Mammary epithelial cell (primary cell): ENCODE measurements at regions of chr10 and their contacts with region 1.

Region 1: GRCh38 chr10:99042051-99042771 is 193.4 kb downstream of the HPSE2 start:
- DNase-seq: no peak
- H3K4me3 ChIP-seq: no peak overlapping the region
- H3K27ac ChIP-seq: no peak overlapping the region
- H3K4me1 ChIP-seq: no peaks in the 10 kb centered on the region
- H3K27me3 ChIP-seq: no peaks in the 10 kb centered on the region
- CTCF ChIP-seq: no peak

Region 2: DNA sequence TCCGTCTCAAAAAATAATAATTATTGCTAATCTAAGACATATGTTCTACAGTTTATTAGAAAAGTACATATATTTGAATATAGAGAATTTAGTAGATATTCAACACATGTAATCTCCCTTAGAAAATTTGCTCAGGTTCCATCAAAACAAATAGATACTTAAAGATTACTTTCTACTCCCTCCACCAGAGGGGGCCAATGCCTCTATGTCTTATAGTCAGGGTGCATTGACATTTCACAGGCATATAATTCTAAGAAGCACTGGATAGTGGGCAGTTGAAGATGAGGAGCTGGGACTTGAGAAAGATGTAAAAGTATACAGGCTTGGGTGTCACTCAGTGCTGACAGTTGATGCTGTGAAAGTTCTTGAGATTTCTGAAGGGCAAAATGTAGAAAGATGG is 293.9 kb before region 1 on chr10:
- CTCF ChIA-PET with region 1: no interaction called
- dilution Hi-C with region 1: no loop called
- in situ Hi-C with region 1: no loop called
- intact Hi-C with region 1: loop called (anchors 1 kb)
- DNase-seq: peak; percentile 23
- H3K4me3 ChIP-seq: no peak overlapping the region
- H3K27ac ChIP-seq: no peak overlapping the region
- H3K4me1 ChIP-seq: no peaks in the 10 kb centered on the region
- H3K27me3 ChIP-seq: peaks cover 2% of the 10 kb centered on the region
- CTCF ChIP-seq: peak; percentile 31 to 63

Region 3: DNA sequence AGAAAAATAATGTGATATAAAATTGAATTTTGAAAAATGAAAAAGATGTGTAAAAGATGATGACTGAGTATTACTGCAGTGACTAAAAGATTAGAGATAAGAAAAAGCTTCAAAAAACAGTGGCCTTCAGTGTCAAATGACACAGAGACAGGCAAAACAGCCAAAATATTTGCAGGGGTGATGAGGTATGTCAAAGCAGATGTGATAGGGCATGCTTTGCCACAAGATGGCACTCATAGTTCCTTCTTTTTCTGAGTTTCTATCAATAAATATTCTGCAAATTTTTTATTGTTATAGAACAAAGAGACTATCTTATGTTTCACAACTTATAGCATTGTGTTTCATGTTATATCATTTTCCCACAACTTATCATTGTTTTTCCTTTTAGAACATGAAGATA is 251.4 kb before region 1 on chr10:
- CTCF ChIA-PET with region 1: no interaction called
- dilution Hi-C with region 1: no loop called
- in situ Hi-C with region 1: no loop called
- intact Hi-C with region 1: loop called (anchors 5 kb)
- DNase-seq: no peak
- H3K4me3 ChIP-seq: no peak overlapping the region
- H3K27ac ChIP-seq: no peak overlapping the region
- H3K4me1 ChIP-seq: no peaks in the 10 kb centered on the region
- H3K27me3 ChIP-seq: no peaks in the 10 kb centered on the region
- CTCF ChIP-seq: peak; percentile 44 to 57

Region 4: DNA sequence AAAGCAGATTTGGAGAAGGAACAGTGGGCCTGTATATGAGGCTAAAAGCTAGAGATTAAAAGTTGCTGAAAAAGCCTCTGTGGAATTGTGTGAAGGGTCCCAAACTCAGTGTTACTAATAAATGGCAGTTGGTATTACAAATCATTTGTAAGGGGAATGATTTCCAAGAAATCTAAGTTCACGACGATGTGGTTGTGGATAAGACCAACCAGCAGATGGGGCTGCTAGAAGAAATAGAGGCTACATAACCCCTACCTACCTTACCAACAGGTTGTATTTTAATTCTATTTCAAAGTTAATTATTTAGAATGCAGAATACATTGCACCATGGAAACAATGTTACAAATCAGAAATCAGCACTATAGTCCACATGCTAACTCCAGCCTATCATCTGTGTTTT is 183.7 kb before region 1 on chr10:
- CTCF ChIA-PET with region 1: no interaction called
- dilution Hi-C with region 1: no loop called
- in situ Hi-C with region 1: no loop called
- intact Hi-C with region 1: loop called (anchors 5 kb)
- DNase-seq: no peak
- H3K4me3 ChIP-seq: no peak overlapping the region
- H3K27ac ChIP-seq: no peak overlapping the region
- H3K4me1 ChIP-seq: no peaks in the 10 kb centered on the region
- H3K27me3 ChIP-seq: no peaks in the 10 kb centered on the region
- CTCF ChIP-seq: peak in 1 of 2 donors; percentile 16

Region 5: GRCh38 chr10:99057936-99058690 is 15.9 kb after region 1 on chr10:
- CTCF ChIA-PET with region 1: no interaction called
- dilution Hi-C with region 1: no loop called
- in situ Hi-C with region 1: no loop called
- intact Hi-C with region 1: no loop called
- DNase-seq: no peak
- H3K4me3 ChIP-seq: no peak overlapping the region
- H3K27ac ChIP-seq: no peak overlapping the region
- H3K4me1 ChIP-seq: no peaks in the 10 kb centered on the region
- H3K27me3 ChIP-seq: peaks cover 2% of the 10 kb centered on the region
- CTCF ChIP-seq: no peak

Region 6: DNA sequence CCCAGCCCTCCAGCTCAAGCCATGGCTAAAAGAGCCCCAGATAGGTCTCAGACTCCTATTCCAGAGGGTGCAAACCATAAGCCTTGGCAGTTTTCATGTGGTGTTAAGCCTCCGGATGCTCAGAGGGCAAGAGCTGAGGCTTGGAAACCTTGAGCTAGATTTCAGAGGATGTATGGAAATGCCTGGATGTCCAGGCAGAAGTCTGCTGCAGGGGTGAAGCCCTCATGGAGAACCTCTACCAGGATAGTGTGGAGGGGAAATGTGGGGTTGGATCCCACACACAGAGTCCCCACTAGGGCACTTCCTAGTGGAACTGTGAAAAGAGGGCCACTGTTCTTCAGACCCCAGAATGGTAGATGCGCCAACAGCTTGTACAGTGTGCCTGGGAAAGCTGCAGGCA is 206.6 kb after region 1 on chr10:
- CTCF ChIA-PET with region 1: interaction called, 4 read pairs
- dilution Hi-C with region 1: no loop called
- in situ Hi-C with region 1: no loop called
- intact Hi-C with region 1: loop called (anchors 10 kb)
- DNase-seq: no peak
- H3K4me3 ChIP-seq: no peak overlapping the region
- H3K27ac ChIP-seq: no peak overlapping the region
- H3K4me1 ChIP-seq: no peaks in the 10 kb centered on the region
- H3K27me3 ChIP-seq: no peaks in the 10 kb centered on the region
- CTCF ChIP-seq: no peak